Aorta (tissue), 5 donors: ENCODE measurements at regions of chr12 and their contacts with region 1.

Region 1: GRCh38 chr12:3202734-3203446 is 125.7 kb downstream of the TSPAN9 start:
- DNase-seq: peak in 1 of 2 donors; percentile 92
- ATAC-seq: peak; percentile 64
- H3K4me3 ChIP-seq: no peak overlapping the region
- H3K27ac ChIP-seq: no peak overlapping the region
- H3K4me1 ChIP-seq: peaks cover 0 to 2% of the 10 kb centered on the region in 2 donors
- H3K27me3 ChIP-seq: no peaks in the 10 kb centered on the region

Region 2: DNA sequence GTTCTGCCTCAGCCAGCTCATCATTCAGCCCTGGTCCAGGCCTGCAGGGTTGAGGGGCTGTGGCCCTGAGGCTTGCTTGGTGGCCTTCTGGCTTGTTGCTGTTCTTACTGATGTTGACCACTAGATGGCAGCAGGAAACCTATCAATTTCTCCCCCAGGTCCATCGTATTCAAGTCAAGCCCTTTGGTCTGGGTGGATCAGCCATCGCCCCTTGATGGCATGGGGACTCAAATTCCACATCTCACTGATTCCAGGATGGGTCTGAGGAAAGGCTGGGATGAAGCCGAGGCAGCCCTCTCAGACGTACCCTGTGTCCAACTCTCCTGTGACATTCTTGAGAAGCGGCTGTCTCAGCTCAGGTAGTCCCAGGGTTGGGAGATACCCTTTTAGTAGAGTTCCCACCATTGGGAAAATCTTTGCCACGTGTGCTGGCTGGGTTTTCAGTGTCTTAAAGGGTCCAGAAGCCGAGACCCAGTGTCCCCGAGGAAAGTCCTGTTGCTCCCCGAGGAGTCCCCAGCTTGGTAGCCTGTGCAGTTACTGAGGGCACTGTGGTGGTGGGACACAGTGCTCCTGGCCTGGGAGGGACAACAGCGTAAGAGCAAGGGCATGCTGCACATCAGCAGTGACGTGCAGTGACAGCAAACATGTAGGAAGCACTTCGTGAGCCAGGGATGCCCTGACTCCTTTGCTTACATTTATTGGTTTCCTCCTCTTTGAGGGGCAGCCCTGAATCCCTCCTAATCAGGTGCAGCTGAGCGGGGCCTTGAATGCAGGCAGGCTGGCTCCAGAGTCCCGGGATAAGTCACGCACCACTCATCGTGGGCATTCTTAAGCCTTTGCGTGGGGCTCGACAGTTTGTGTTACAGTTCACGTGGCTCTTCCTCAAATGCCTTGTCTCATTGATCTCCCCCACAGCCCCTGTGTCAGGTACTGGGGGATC is 67.1 kb before region 1 on chr12:
- intact Hi-C with region 1: loop called (anchors 2 to 5 kb)
- DNase-seq: peak; percentile 43 to 44
- ATAC-seq: peak; percentile 79
- H3K4me3 ChIP-seq: no peak overlapping the region
- H3K27ac ChIP-seq: no peak overlapping the region
- H3K4me1 ChIP-seq: no peaks in the 10 kb centered on the region
- H3K27me3 ChIP-seq: no peaks in the 10 kb centered on the region

Region 3: GRCh38 chr12:3150931-3151835 is 51.7 kb before region 1 on chr12:
- intact Hi-C with region 1: loop called (anchors 2 to 5 kb)
- DNase-seq: peak in 1 of 2 donors; percentile 72
- ATAC-seq: peak; percentile 12
- H3K4me3 ChIP-seq: no peak overlapping the region
- H3K27ac ChIP-seq: peak overlapping the region; percentile 12 to 84
- H3K4me1 ChIP-seq: no peaks in the 10 kb centered on the region
- H3K27me3 ChIP-seq: no peaks in the 10 kb centered on the region

Region 4: GRCh38 chr12:3252450-3252891 is 49.6 kb after region 1 on chr12:
- intact Hi-C with region 1: loop called in 1 of 2 experiments (anchors 5 kb)
- DNase-seq: peak; percentile 92
- ATAC-seq: peak; percentile 89
- H3K4me3 ChIP-seq: no peak overlapping the region
- H3K27ac ChIP-seq: peak overlapping the region; percentile 54 to 90
- H3K4me1 ChIP-seq: peaks cover 0 to 12% of the 10 kb centered on the region in 2 donors
- H3K27me3 ChIP-seq: no peaks in the 10 kb centered on the region